ENCODE measurements at regions of chr3 and their contacts with region 1.

Region 1: GRCh38 chr3:176663837-176664831 is 533.1 kb downstream of the TBL1XR1 start:
- DNase-seq: peak; percentile 74
- ATAC-seq: peak; percentile 97
- H3K4me3 ChIP-seq: no peak overlapping the region
- H3K27ac ChIP-seq: no peak overlapping the region
- H3K4me1 ChIP-seq: 0 out of 2 replicates have a peak, but pooled peaks cover 5% of the 10 kb centered on the region
- H3K27me3 ChIP-seq: no peaks in the 10 kb centered on the region
- CTCF ChIP-seq: peak; percentile 73

Region 2: GRCh38 chr3:175267121-175267531 is 1397.0 kb before region 1 on chr3:
- CTCF ChIA-PET with region 1: no interaction called
- POLR2A ChIA-PET with region 1: no interaction called
- intact Hi-C with region 1: loop called (anchors 10 kb)
- DNase-seq: peak; percentile 62
- ATAC-seq: peak; percentile 81
- H3K4me3 ChIP-seq: peak overlapping the region; percentile 14
- H3K27ac ChIP-seq: peak overlapping the region; percentile 94
- H3K4me1 ChIP-seq: peaks cover 27% of the 10 kb centered on the region
- H3K27me3 ChIP-seq: no peaks in the 10 kb centered on the region
- CTCF ChIP-seq: no peak

Region 3: DNA sequence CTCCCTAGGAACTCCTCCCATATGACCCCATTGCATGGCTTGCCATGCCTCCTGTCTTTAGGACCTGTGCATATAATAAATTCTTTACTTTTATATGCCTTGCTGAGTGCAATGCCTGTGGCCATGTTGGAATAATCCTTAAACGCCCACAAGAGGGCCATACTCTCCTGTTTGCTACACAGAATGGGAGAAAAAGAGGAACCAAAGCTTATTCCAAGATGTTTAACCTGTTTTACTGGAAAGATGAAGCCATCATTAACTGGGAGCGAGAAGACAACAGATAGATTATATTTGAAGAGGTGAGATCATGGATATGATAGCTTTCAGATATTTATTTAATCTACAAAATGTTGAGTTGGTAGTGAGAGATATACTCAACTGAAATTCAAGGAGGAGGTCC is 707.1 kb before region 1 on chr3:
- CTCF ChIA-PET with region 1: no interaction called
- POLR2A ChIA-PET with region 1: no interaction called
- intact Hi-C with region 1: loop called (anchors 2 kb)
- DNase-seq: peak; percentile 62
- ATAC-seq: peak; percentile 40; the same call in 1 of the 2 replicates
- H3K4me3 ChIP-seq: no peak overlapping the region
- H3K27ac ChIP-seq: no peak overlapping the region
- H3K4me1 ChIP-seq: no peaks in the 10 kb centered on the region
- H3K27me3 ChIP-seq: no peaks in the 10 kb centered on the region
- CTCF ChIP-seq: peak; percentile 74

Region 4: DNA sequence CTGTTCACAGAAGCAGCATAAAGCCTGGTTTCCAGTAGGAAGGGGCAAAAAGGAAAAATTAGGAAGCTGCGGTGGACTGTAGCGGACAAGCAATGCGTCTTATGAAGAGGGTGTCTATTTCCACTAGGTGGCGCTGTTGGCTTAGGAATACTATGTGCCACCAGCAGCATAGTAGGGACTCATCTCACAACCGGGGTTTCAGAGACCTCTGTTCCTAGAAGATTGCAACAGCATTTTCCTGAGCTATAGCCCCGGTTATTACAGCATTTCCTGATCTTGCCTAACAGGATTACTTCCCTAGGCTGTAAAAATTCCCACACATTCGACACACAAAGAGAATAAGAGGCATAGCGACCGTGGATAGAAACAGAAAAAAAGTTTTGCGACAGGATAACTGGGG is 149.8 kb before region 1 on chr3:
- CTCF ChIA-PET with region 1: no interaction called
- POLR2A ChIA-PET with region 1: no interaction called
- intact Hi-C with region 1: loop called (anchors 1 kb)
- DNase-seq: peak; percentile 80
- ATAC-seq: peak; percentile 64
- H3K4me3 ChIP-seq: no peak overlapping the region
- H3K27ac ChIP-seq: no peak overlapping the region
- H3K4me1 ChIP-seq: no peaks in the 10 kb centered on the region
- H3K27me3 ChIP-seq: no peaks in the 10 kb centered on the region
- CTCF ChIP-seq: peak; percentile 87

Region 5: GRCh38 chr3:176814285-176814684 is 150.2 kb after region 1 on chr3:
- CTCF ChIA-PET with region 1: interaction called, 3 read pairs
- POLR2A ChIA-PET with region 1: no interaction called
- intact Hi-C with region 1: loop called (anchors 10 kb)
- DNase-seq: peak; percentile 78
- ATAC-seq: peak; percentile 99
- H3K4me3 ChIP-seq: no peak overlapping the region
- H3K27ac ChIP-seq: no peak overlapping the region
- H3K4me1 ChIP-seq: no peaks in the 10 kb centered on the region
- H3K27me3 ChIP-seq: no peaks in the 10 kb centered on the region
- CTCF ChIP-seq: peak; percentile 84

Region 6: GRCh38 chr3:176939022-176939817 is 275.1 kb after region 1 on chr3:
- CTCF ChIA-PET with region 1: no interaction called
- POLR2A ChIA-PET with region 1: no interaction called
- intact Hi-C with region 1: loop called (anchors 2 kb)
- DNase-seq: peak; percentile 86
- ATAC-seq: peak; percentile 96
- H3K4me3 ChIP-seq: peak overlapping the region; percentile 40; the same call in 1 of the 2 replicates
- H3K27ac ChIP-seq: no peak overlapping the region
- H3K4me1 ChIP-seq: peaks cover 4% of the 10 kb centered on the region; the same call in 1 of the 2 replicates
- H3K27me3 ChIP-seq: no peaks in the 10 kb centered on the region
- CTCF ChIP-seq: peak; percentile 94